ENCODE measurements at regions of chr6 and their contacts with region 1.

Region 1: GRCh38 chr6:53815381-53816119 is 20.7 kb downstream of the LRRC1 start:
- DNase-seq: no peak
- H3K4me3 ChIP-seq: peak overlapping the region in 2 of 4 donors; percentile 1 to 8
- H3K27ac ChIP-seq: peak overlapping the region; percentile 29 to 74 (median 64)
- H3K4me1 ChIP-seq: peaks cover 0 to 75% (median 45%) of the 10 kb centered on the region in 4 donors
- H3K27me3 ChIP-seq: no peaks in the 10 kb centered on the region
- CTCF ChIP-seq: no peak
- EP300 ChIP-seq: no peak
- POLR2A ChIP-seq: no peak

Region 2: DNA sequence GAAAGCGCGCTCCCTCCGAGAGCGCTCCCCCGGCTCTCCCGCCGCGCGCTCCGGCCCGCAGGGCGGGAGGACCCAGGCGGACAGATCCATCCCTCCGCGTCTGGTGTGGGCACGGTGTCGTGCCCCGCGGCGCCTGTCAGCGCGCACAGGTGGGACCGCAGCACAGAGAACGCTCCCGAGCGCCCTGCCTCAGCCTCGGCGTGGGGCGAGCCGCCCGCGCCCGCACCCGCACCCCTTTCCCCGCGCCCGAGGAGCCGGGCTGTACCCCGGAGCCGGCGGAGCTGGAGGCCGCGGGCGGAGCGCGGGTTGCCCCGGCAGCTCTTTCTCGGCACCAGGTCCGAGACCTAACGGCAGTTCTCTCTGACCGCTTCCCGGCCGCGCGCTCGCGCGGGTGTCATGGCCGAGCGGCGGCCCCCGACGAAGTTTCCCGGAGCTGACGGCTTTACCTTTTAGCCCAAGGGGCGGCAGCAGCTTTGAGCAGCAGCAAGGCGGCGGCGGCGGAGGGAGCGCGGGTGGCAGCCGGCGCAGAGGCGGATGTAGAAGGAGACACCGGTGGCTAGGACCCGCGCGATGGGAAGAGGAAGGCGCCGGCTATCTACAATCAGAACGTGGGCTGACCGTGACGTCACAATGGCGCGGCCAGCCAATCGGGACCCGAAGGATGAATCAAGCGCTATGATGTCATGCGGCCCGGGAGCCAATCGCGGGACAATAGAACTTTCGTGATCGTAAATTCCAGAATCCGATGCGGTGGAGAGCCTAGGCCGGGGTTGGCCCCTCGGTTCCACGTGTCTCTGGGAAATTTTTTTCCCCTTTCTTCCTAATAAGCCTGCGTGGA is 467.0 kb before region 1 on chr6 and contains the start of gene ELOVL5:
- intact Hi-C with region 1: no loop called
- DNase-seq: peak; percentile 99
- H3K4me3 ChIP-seq: peak within 1 kb of the TSS; percentile 67 to 99 (median 90)
- H3K27ac ChIP-seq: peak within 1 kb of the TSS; percentile 91 to 100 (median 100)
- H3K4me1 ChIP-seq: peaks cover 0 to 30% (median 21%) of the 10 kb centered on the region in 4 donors
- H3K27me3 ChIP-seq: no peaks in the 10 kb centered on the region
- CTCF ChIP-seq: no peak
- EP300 ChIP-seq: peak in 1 of 4 donors; percentile 59
- POLR2A ChIP-seq: peak; percentile 77 to 91
- total RNA-seq, gene ELOVL5: 54.3 to 73.8 (median 70.4) TPM

Region 3: GRCh38 chr6:53862662-53863462 is 47.3 kb after region 1 on chr6:
- intact Hi-C with region 1: loop called (anchors 5 kb)
- DNase-seq: peak; percentile 70
- H3K4me3 ChIP-seq: no peak overlapping the region
- H3K27ac ChIP-seq: peak overlapping the region; percentile 45 to 76 (median 62)
- H3K4me1 ChIP-seq: peaks cover 0 to 57% (median 36%) of the 10 kb centered on the region in 4 donors
- H3K27me3 ChIP-seq: no peaks in the 10 kb centered on the region
- CTCF ChIP-seq: peak in 1 of 4 experiments; percentile 18
- EP300 ChIP-seq: peak in 1 of 4 donors; percentile 51
- POLR2A ChIP-seq: no peak

Measured in sigmoid colon (tissue), 7 donors.